Dendritic cell treated with granulocyte-macrophage colony-stimulating factor and Interleukin-4, amounts not matched to agents 40 ng/mL and 50 ng/mL, for 4 days (primary cell): ENCODE measurements at regions of chr2 and their contacts with region 1.

Region 1: DNA sequence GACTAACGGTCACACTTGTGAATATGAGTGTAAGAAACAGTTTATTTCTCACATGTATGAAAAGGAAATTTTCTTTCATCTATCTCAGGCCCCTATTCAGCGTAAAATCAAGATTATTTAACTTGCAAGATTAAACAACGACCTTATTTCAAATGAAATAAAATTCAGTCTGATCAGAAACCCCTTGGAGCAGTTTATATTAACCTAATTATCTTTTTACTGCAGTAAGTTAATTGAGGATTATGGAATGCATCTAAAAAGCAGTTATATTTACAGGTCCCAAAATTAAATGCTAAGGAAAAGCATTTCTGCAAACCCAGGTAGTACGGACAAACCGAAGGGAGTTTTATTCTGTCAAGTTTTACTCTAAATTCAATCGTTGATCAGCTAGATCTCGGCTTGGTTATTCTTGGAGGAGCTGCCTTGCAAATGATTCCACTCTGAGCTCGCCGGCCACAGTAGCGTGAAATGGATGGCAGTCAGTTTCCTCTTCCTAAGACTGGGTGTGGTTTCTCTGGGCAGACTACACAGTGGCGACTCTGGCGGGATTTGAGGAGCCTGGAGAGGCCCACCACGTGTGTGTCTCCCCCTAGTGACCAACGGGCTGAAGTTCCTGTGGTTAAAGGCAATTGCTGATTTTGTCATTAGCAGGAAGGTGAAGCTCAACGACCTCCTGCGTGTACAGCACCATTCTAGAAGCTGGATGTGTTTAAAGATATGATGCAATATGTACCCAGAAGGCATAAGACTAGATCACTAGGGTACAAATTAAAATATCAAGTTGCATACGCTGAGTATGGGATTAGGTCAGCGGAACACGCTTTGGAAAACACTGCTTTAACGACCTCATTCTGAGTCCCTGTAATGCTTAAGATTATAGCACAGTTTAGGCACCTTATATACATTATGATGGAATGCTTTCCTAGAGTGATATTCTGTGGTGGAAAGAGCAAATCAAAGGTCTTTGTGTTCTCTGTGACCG is 36.4 kb downstream of the PRKRA start:
- H3K4me3 Mint-ChIP-seq: peak overlapping the region; percentile 96
- H3K27ac Mint-ChIP-seq: peak overlapping the region; percentile 100
- H3K4me1 Mint-ChIP-seq: peaks cover 32% of the 10 kb centered on the region
- H3K27me3 Mint-ChIP-seq: no peaks in the 10 kb centered on the region

Region 2: GRCh38 chr2:178112202-178113152 is 302.1 kb before region 1 on chr2 and contains the start of gene RBM45:
- intact Hi-C with region 1: loop called (anchors 1 kb)
- H3K4me3 Mint-ChIP-seq: peak within 1 kb of the TSS; percentile 91
- H3K27ac Mint-ChIP-seq: peak within 1 kb of the TSS; percentile 89
- H3K4me1 Mint-ChIP-seq: peaks cover 32% of the 10 kb centered on the region
- H3K27me3 Mint-ChIP-seq: peaks cover 3% of the 10 kb centered on the region

Region 3: GRCh38 chr2:178177066-178177679 is 237.4 kb before region 1 on chr2:
- intact Hi-C with region 1: no loop called
- H3K4me3 Mint-ChIP-seq: no peak overlapping the region
- H3K27ac Mint-ChIP-seq: no peak overlapping the region
- H3K4me1 Mint-ChIP-seq: no peaks in the 10 kb centered on the region
- H3K27me3 Mint-ChIP-seq: peaks cover 1% of the 10 kb centered on the region

Region 4: DNA sequence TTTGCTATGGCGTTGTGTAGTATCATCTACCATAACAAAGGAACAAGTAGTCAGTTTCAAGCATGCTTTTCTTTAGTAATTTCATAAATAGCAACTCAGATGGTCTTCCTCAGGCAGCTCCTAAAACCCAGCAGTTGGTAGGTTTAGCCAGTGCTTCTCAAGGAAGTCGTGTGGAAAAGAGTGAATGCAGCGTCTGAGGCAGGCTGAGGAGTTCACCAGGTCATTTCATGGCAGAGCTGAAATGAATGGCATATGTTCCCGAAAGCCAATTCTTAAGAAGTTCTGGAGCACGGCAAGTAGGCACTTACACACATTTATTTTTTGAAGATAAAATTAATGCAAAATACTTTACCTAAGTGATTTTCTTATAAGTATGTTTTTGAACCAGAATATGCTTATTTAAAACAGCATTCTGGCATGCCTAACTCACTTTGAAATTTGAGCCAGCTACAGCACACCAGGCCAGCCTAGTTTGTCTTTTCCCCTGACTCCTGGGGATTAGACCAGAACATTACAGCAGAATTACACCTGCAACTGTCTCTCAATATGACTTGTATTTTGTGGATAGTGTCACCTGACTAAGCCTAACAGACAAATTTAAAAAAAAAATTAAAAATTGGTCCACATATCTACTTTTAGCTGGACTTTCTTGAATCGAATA is 158.0 kb before region 1 on chr2:
- intact Hi-C with region 1: no loop called
- H3K4me3 Mint-ChIP-seq: no peak overlapping the region
- H3K27ac Mint-ChIP-seq: no peak overlapping the region
- H3K4me1 Mint-ChIP-seq: no peaks in the 10 kb centered on the region
- H3K27me3 Mint-ChIP-seq: no peaks in the 10 kb centered on the region

Region 5: DNA sequence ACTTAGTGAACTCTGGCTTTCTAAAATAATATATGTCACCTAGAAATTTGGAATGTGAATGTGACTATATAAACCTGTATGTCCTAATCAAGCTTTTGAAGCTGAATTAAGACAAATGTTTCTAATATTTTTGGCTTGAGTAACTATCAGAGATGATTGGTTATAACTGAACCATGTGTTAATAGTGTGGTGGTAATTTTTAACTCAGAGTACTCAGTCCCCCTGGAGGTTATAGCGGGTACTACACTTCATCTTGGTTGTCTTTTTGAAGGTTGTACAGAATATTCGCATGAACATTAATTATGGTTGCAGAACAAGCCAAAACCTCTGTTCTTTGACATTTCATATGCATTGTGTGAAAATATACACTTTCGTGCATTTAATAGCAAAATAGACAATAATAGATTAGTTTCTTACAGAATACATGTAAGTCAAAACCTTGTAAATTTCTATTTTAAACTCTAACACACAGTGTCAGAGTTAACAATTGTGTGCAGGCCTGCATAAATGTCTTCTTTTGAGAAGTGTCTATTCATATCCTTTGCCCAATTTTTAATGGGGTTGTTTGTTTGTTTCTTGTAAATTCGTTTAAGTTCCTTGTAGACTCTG is 134.2 kb before region 1 on chr2:
- intact Hi-C with region 1: loop called (anchors 10 kb)
- H3K4me3 Mint-ChIP-seq: no peak overlapping the region
- H3K27ac Mint-ChIP-seq: no peak overlapping the region
- H3K4me1 Mint-ChIP-seq: peaks cover 24% of the 10 kb centered on the region
- H3K27me3 Mint-ChIP-seq: peaks cover 1% of the 10 kb centered on the region

Region 6: GRCh38 chr2:178397002-178397605 is 17.5 kb before region 1 on chr2:
- intact Hi-C with region 1: loop called (anchors 1 kb)
- H3K4me3 Mint-ChIP-seq: no peak overlapping the region
- H3K27ac Mint-ChIP-seq: no peak overlapping the region
- H3K4me1 Mint-ChIP-seq: no peaks in the 10 kb centered on the region
- H3K27me3 Mint-ChIP-seq: no peaks in the 10 kb centered on the region

Region 7: GRCh38 chr2:178450774-178451525 is 36.4 kb after region 1 on chr2 and contains the starts of genes PJVK and PRKRA:
- intact Hi-C with region 1: loop called (anchors 1 kb)
- H3K4me3 Mint-ChIP-seq: peak within 1 kb of the TSS; percentile 88
- H3K27ac Mint-ChIP-seq: peak within 1 kb of the TSS; percentile 98
- H3K4me1 Mint-ChIP-seq: peaks cover 26% of the 10 kb centered on the region
- H3K27me3 Mint-ChIP-seq: peaks cover 3% of the 10 kb centered on the region

Region 8: DNA sequence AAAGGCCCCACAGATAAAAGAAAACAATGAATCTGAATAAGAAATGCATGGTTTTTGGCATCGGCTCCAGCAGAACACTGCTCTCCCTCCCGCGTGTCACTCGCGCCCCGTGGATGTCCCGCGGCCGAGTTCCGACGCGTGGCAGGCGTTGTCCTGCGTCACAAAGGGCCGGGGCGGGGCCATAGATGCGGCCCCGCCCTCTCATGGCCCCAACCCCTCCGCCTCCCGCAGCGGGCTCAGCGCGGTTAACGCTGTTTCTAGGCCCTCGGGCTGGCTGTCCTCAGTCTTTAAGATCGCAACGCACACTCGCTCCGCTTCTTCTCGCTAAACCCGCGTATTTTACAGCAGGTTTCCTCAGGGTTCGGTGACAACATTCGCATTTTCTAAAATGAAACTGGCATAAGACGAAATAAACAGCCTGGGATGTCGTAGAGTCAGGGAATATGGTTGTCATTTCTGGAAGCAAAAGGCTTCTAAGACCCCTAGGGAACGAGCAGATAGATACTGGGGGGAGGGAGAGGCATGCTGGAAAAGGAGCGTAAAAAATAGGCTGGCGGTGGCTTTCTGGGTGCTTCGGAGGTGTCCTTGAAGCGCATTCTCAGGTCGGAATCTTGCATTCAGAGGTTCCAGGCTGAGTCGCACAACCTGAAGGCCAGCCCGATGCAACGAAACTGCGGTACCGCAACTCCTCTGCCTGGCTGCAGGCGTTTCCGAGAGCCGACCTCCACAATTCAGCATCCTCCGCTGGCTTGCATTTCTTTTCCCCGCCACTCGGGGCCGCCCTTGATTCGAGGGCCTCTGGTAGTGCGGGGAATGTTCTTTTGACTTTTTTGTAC is 64.1 kb after region 1 on chr2 and contains the start of gene FKBP7:
- intact Hi-C with region 1: loop called (anchors 2 kb)
- H3K4me3 Mint-ChIP-seq: peak within 1 kb of the TSS; percentile 95
- H3K27ac Mint-ChIP-seq: peak within 1 kb of the TSS; percentile 98
- H3K4me1 Mint-ChIP-seq: peaks cover 23% of the 10 kb centered on the region
- H3K27me3 Mint-ChIP-seq: no peaks in the 10 kb centered on the region

Region 9: GRCh38 chr2:178536037-178536436 is 121.5 kb after region 1 on chr2:
- intact Hi-C with region 1: no loop called
- H3K4me3 Mint-ChIP-seq: no peak overlapping the region
- H3K27ac Mint-ChIP-seq: no peak overlapping the region
- H3K4me1 Mint-ChIP-seq: peaks cover 28% of the 10 kb centered on the region
- H3K27me3 Mint-ChIP-seq: no peaks in the 10 kb centered on the region